Activated naive CD4-positive, alpha-beta T cell treated with anti-CD3 and anti-CD28 coated beads, Interleukin-2, amount 10 ng/mL, durations not matched to agents 7 days and 5 days (primary cell): ENCODE measurements at regions of chr3 and their contacts with region 1.

Region 1: DNA sequence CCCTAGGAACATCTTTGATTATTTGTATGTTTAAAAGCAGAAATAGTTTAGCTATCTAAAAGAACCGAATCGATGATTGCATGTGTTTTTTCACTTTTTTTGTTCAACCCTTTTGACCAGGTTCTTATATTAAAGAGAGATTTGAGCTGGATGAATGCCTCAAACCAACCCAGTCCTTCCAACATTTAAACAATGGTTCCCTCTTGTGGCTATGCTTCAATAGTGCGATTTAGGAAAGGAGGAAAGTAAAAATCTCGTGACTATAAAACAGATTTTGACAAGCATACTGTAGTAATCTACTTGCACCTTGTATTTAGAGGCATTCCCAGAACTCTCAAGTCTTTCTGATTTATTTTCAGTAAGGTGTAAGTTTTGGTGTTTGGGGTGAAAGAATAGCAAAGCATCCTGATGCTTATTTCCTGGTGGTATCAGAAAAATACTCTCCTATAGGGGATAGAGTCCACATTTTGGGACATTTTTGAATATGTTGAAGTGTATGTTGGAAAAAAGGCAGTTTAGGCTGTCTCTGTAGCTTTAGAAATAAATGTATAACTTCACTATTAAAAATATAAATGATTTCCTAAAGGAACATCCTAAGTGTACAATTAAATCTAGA is 159.6 kb upstream of the KCNH8 start:
- DNase-seq: no peak
- H3K4me3 Mint-ChIP-seq: peak overlapping the region; percentile 50
- H3K27ac Mint-ChIP-seq: no peak overlapping the region
- H3K4me1 Mint-ChIP-seq: peaks cover 22% of the 10 kb centered on the region
- H3K27me3 Mint-ChIP-seq: peaks cover 15% of the 10 kb centered on the region

Region 2: DNA sequence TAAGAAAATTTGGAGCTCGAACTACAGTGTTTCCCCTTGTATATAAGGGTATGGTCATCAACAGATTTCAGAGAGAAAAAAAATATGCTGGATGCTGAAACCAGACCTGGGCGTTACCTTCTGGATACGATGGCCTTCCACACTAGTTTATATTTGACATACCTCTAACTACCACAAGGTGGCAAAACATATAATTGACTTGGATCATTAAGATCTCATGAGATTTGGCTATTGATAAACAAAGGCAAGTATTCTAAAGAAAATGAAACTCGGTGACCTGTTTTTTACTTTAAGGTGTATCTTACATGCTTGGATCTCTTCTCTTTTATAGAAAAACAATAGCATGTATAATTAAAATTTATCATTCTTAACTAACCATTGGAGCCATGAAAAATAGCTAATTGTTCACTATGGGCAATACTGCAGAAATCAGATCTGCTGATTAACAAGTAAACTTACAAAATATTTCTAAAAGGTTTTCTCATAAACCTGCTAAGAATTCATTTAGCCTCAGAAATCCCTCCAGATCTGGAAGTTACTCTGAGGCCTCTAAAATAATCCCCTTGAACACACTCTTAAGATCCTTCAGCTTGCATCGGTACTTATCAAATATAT is 141.0 kb before region 1 on chr3:
- CTCF ChIA-PET with region 1: interaction called, 18 read pairs
- DNase-seq: no peak
- H3K4me3 Mint-ChIP-seq: no peak overlapping the region
- H3K27ac Mint-ChIP-seq: no peak overlapping the region
- H3K4me1 Mint-ChIP-seq: peaks cover 12% of the 10 kb centered on the region
- H3K27me3 Mint-ChIP-seq: peaks cover 4% of the 10 kb centered on the region

Region 3: GRCh38 chr3:19002606-19003005 is 13.9 kb after region 1 on chr3:
- CTCF ChIA-PET with region 1: no interaction called
- DNase-seq: no peak
- H3K4me3 Mint-ChIP-seq: no peak overlapping the region
- H3K27ac Mint-ChIP-seq: no peak overlapping the region
- H3K4me1 Mint-ChIP-seq: no peaks in the 10 kb centered on the region
- H3K27me3 Mint-ChIP-seq: no peaks in the 10 kb centered on the region

Region 4: DNA sequence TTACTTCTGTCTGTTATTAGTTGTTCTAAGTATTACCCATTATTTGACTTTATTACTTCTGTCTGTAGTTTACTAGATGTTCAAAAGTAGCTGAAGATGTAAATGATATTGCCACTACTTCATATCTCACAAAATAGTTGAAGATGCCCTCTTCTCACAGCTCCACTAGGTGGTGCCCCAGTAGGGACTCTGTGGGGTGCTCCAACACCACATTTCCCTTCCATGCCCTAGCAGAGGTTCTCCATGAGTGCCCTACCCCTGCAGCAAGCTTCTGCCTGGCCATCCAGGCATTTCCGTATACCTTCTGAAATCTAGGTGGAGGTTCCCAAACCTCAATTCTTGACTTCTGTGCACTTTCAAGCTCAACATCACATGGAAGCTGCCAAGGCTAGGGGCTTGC is 240.4 kb after region 1 on chr3:
- CTCF ChIA-PET with region 1: no interaction called
- DNase-seq: no peak
- H3K4me3 Mint-ChIP-seq: no peak overlapping the region
- H3K27ac Mint-ChIP-seq: no peak overlapping the region
- H3K4me1 Mint-ChIP-seq: no peaks in the 10 kb centered on the region
- H3K27me3 Mint-ChIP-seq: peaks cover 5% of the 10 kb centered on the region